Panc1 (cell line): ENCODE measurements at regions of chr2 and their contacts with region 1.

Region 1: DNA sequence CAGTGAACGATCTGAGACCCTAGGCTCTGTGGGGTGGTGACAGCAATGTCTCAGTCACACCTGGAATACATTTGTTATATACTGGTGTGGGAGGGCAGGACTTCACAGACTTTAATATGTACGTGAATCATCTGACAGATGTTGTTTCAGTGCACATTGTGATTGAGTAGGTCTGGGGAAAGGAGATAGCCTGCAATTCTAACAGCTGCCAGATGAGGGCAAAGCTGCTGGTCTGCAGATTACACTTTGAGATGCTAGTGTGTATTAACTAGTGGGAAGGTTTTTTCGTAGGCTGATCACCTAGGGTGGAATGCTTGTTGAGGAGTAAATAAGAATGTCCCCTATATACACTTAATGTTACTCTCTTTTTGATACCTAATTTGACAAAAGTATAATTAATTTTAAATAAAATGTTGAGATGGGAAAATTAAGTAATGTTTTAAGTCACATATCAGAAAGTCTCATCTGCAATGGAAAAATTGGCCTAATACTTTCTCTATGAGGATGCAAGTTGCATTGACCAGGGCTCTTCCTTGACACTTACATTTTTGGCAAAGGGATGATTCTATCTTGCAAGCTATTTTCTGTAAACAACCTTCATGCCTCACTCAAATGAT is 496.9 kb upstream of the HNMT start:
- DNase-seq: peak; percentile 32
- ATAC-seq: peak; percentile 82
- H3K4me3 ChIP-seq: no peak overlapping the region
- H3K27ac ChIP-seq: no peak overlapping the region
- H3K4me1 ChIP-seq: no peaks in the 10 kb centered on the region
- H3K27me3 ChIP-seq: no peaks in the 10 kb centered on the region
- CTCF ChIP-seq: peak; percentile 74

Region 2: DNA sequence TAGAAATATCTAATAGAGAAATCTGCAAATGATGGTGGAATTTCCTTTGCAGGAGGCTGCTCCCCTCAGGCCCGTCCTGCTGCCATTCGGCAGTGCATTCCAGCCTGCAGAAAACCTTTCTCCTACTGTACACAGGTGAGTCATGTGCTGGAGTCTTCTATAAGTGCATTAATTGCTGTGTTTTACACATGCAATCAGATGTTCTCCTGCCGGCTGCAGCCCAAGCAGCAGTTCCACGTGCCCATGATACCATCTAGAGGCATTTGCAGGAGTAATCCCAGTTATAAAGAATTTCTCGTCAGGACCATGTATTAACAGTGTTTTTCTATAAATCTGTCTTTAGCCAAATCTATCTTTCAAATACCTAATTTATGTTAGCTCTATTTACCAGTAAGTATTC is 192.3 kb after region 1 on chr2:
- CTCF ChIA-PET with region 1: no interaction called
- POLR2A ChIA-PET with region 1: no interaction called
- in situ Hi-C with region 1: no loop called
- intact Hi-C with region 1: loop called (anchors 10 kb)
- DNase-seq: no peak
- ATAC-seq: no peak
- H3K4me3 ChIP-seq: no peak overlapping the region
- H3K27ac ChIP-seq: no peak overlapping the region
- H3K4me1 ChIP-seq: no peaks in the 10 kb centered on the region
- H3K27me3 ChIP-seq: no peaks in the 10 kb centered on the region
- CTCF ChIP-seq: peak; percentile 34